Tibial artery (tissue), 4 donors: ENCODE measurements at regions of chr10 and their contacts with region 1.

Region 1: DNA sequence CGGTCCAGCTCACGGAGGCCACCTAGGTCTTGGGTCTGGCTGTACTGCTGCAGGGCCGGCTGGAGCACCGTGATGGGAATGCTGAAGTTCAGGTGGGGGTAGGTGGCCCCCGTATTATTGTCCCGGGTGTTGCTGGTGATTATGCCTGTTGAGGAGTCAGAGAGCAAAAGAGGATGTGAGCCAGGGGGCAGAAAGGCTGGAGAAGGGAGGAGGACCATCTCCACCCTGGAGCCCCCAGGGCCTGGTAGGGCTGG is 6.6 kb downstream of the TYSND1 start:
- DNase-seq: no peak
- H3K4me3 ChIP-seq: no peak overlapping the region
- H3K27ac ChIP-seq: no peak overlapping the region
- H3K4me1 ChIP-seq: peaks cover 0 to 14% (median 7%) of the 10 kb centered on the region in 4 donors
- H3K27me3 ChIP-seq: no peaks in the 10 kb centered on the region
- CTCF ChIP-seq: no peak

Region 2: DNA sequence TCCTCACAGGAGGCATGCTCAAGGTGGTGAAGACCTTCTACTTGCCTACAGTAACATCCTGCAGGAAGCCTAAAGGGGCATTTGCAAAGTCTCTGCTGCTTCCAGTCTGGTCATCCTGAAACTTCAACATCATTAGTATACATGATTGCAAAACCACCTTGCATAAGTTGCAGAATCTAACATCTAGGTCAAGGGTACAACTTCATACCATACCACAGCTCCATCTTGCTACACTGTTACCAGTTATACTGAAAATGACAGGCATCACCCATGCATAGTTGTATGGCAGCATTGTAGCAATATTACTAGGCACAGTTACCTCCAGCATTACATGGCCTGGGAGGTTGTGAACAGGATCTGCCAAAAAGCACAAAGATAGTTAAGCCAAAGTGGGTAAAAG is 101.0 kb before region 1 on chr10:
- intact Hi-C with region 1: no loop called
- DNase-seq: no peak
- H3K4me3 ChIP-seq: no peak overlapping the region
- H3K27ac ChIP-seq: no peak overlapping the region
- H3K4me1 ChIP-seq: no peaks in the 10 kb centered on the region
- H3K27me3 ChIP-seq: no peaks in the 10 kb centered on the region
- CTCF ChIP-seq: no peak

Region 3: GRCh38 chr10:70121281-70121949 is 18.5 kb before region 1 on chr10:
- intact Hi-C with region 1: loop called (anchors 1 kb)
- DNase-seq: no peak
- H3K4me3 ChIP-seq: no peak overlapping the region
- H3K27ac ChIP-seq: no peak overlapping the region
- H3K4me1 ChIP-seq: no peaks in the 10 kb centered on the region
- H3K27me3 ChIP-seq: no peaks in the 10 kb centered on the region
- CTCF ChIP-seq: no peak

Region 4: DNA sequence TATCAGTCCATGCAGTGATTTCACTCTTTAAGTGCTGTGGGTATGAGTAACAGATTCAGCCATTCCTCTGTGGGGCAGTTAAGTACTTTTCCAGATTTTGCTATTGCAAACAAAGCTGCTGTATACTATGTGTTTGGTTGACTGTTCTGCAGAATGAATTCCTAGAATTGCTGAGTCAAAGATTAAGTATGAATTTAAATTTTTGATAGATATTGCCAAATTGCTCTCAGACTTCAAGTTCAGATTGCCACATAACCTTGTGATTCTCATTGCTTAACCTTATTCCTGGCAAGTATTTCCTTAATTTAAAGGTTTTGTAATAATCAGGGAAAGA is 52.0 kb after region 1 on chr10:
- intact Hi-C with region 1: no loop called
- DNase-seq: no peak
- H3K4me3 ChIP-seq: no peak overlapping the region
- H3K27ac ChIP-seq: no peak overlapping the region
- H3K4me1 ChIP-seq: peaks cover 0 to 38% (median 3%) of the 10 kb centered on the region in 4 donors
- H3K27me3 ChIP-seq: no peaks in the 10 kb centered on the region
- CTCF ChIP-seq: no peak